ENCODE measurements at regions of chr12 and their contacts with region 1.

Region 1: DNA sequence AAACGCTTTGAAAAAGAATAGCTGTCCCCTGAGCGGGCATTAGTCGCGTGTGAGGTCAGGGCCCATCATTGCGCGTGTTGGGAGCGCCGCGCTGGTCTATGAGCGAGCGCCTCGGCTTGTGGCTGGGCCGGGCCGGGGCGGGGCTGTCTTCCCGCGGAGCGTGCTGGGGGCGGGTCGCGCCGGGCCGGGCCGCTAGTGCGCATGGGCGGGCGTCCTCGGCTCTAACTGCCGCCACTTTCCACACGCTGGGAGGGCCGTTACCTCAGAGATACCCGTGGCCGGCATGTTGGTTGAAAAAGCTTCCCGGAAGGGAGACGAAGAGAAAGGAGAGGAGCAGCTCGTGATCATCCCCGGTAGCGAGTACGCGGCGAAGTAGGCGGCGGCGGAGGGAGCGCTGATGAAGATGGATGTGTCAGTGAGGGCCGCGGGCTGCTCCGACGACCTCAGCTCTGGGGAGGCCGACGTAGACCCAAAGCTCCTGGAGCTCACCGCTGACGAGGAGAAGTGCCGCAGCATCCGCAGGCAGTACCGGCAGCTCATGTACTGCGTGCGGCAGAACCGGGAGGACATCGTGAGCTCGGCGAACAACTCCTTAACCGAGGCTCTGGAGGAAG is at the start of gene EID3:
- DNase-seq: peak; percentile 90 to 93 (median 91)
- H3K4me3 ChIP-seq: peak within 1 kb of the TSS; percentile 64 to 67
- H3K4me3 Mint-ChIP-seq: peak within 1 kb of the TSS; percentile 90 to 99 (median 97)
- H3K27ac ChIP-seq: peak within 1 kb of the TSS; percentile 95
- H3K27ac Mint-ChIP-seq: peak within 1 kb of the TSS; percentile 97 to 98 (median 98)
- H3K4me1 ChIP-seq: peaks cover 41% of the 10 kb centered on the region
- H3K4me1 Mint-ChIP-seq: peaks cover 40 to 78% (median 55%) of the 10 kb centered on the region in 4 donors
- H3K27me3 ChIP-seq: no peaks in the 10 kb centered on the region
- H3K27me3 Mint-ChIP-seq: no peaks in the 10 kb centered on the region
- total RNA-seq, gene EID3: 9.4 to 9.9 TPM

Region 2: GRCh38 chr12:104064031-104064822 is 239.4 kb before region 1 on chr12 and contains the start of gene HCFC2:
- CTCF ChIA-PET with region 1: no interaction called
- POLR2A ChIA-PET with region 1: no interaction called
- intact Hi-C with region 1: loop called (anchors 5 kb)
- DNase-seq: peak; percentile 83 to 91 (median 86)
- H3K4me3 ChIP-seq: peak within 1 kb of the TSS; percentile 91 to 98
- H3K4me3 Mint-ChIP-seq: peak within 1 kb of the TSS; percentile 91 to 97 (median 94)
- H3K27ac ChIP-seq: peak within 1 kb of the TSS; percentile 77
- H3K27ac Mint-ChIP-seq: peak within 1 kb of the TSS; percentile 85 to 95 (median 92)
- H3K4me1 ChIP-seq: peaks cover 21% of the 10 kb centered on the region
- H3K4me1 Mint-ChIP-seq: peaks cover 18 to 35% (median 23%) of the 10 kb centered on the region in 4 donors
- H3K27me3 ChIP-seq: peaks cover 5% of the 10 kb centered on the region
- H3K27me3 Mint-ChIP-seq: peaks cover 4 to 5% of the 10 kb centered on the region in 2 donors
- total RNA-seq, gene HCFC2: 18.1 to 18.5 TPM

Region 3: GRCh38 chr12:104215638-104216297 is 87.9 kb before region 1 on chr12 and contains the start of gene TXNRD1:
- CTCF ChIA-PET with region 1: interaction called, 12 read pairs
- POLR2A ChIA-PET with region 1: interaction called, 6 read pairs
- intact Hi-C with region 1: loop called (anchors 1 kb)
- DNase-seq: peak; percentile 78 to 84 (median 82)
- H3K4me3 ChIP-seq: peak within 1 kb of the TSS in 1 of 2 donors; percentile 62
- H3K4me3 Mint-ChIP-seq: peak within 1 kb of the TSS; percentile 73 to 92 (median 86)
- H3K27ac ChIP-seq: peak within 1 kb of the TSS; percentile 57
- H3K27ac Mint-ChIP-seq: peak within 1 kb of the TSS; percentile 2 to 93 (median 84)
- H3K4me1 ChIP-seq: peaks cover 29% of the 10 kb centered on the region
- H3K4me1 Mint-ChIP-seq: peaks cover 18 to 38% (median 27%) of the 10 kb centered on the region in 4 donors
- H3K27me3 ChIP-seq: no peaks in the 10 kb centered on the region
- H3K27me3 Mint-ChIP-seq: no peaks in the 10 kb centered on the region
- total RNA-seq, gene TXNRD1: 57.6 to 64.5 TPM

Region 4: GRCh38 chr12:104286538-104287482 is 16.8 kb before region 1 on chr12:
- CTCF ChIA-PET with region 1: interaction called, 41 read pairs
- POLR2A ChIA-PET with region 1: interaction called, 97 read pairs
- intact Hi-C with region 1: loop called (anchors 1 kb)
- DNase-seq: peak; percentile 87 to 94 (median 88)
- H3K4me3 ChIP-seq: peak overlapping the region; percentile 80 to 96
- H3K4me3 Mint-ChIP-seq: peak overlapping the region; percentile 94 to 100 (median 99)
- H3K27ac ChIP-seq: peak overlapping the region; percentile 82
- H3K27ac Mint-ChIP-seq: peak overlapping the region; percentile 94 to 99 (median 96)
- H3K4me1 ChIP-seq: peaks cover 35% of the 10 kb centered on the region
- H3K4me1 Mint-ChIP-seq: peaks cover 23 to 41% (median 30%) of the 10 kb centered on the region in 4 donors
- H3K27me3 ChIP-seq: no peaks in the 10 kb centered on the region
- H3K27me3 Mint-ChIP-seq: peaks cover 0 to 2% of the 10 kb centered on the region in 2 donors

Region 5: DNA sequence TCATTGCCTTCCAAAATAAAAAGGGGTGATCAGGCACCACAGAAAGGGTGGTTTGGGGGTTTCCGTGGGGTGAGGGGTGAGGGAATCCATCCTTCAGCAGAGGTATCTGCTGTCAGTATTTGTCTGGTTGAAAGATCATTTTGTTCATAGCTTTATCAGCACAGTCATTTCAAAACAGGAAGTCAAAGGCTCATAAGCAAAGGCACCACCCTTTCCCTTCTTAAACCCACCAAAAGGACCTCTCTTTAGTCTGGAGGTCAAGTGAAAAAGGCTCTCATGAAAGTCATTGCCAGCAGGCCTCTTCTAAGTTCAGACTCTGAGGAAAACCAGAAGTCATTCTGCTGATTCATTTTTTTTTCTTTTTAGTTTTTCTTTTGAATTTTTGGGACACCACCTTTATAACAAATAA is 159.3 kb after region 1 on chr12:
- CTCF ChIA-PET with region 1: no interaction called
- POLR2A ChIA-PET with region 1: no interaction called
- intact Hi-C with region 1: loop called (anchors 10 kb)
- DNase-seq: peak; percentile 53 to 83 (median 58)
- H3K4me3 ChIP-seq: peak overlapping the region; percentile 2 to 21
- H3K4me3 Mint-ChIP-seq: peak overlapping the region; percentile 79 to 93 (median 84)
- H3K27ac ChIP-seq: peak overlapping the region; percentile 62
- H3K27ac Mint-ChIP-seq: peak overlapping the region; percentile 85 to 96 (median 93)
- H3K4me1 ChIP-seq: peaks cover 86% of the 10 kb centered on the region
- H3K4me1 Mint-ChIP-seq: peaks cover 60 to 95% (median 75%) of the 10 kb centered on the region in 4 donors
- H3K27me3 ChIP-seq: no peaks in the 10 kb centered on the region
- H3K27me3 Mint-ChIP-seq: no peaks in the 10 kb centered on the region

Region 6: DNA sequence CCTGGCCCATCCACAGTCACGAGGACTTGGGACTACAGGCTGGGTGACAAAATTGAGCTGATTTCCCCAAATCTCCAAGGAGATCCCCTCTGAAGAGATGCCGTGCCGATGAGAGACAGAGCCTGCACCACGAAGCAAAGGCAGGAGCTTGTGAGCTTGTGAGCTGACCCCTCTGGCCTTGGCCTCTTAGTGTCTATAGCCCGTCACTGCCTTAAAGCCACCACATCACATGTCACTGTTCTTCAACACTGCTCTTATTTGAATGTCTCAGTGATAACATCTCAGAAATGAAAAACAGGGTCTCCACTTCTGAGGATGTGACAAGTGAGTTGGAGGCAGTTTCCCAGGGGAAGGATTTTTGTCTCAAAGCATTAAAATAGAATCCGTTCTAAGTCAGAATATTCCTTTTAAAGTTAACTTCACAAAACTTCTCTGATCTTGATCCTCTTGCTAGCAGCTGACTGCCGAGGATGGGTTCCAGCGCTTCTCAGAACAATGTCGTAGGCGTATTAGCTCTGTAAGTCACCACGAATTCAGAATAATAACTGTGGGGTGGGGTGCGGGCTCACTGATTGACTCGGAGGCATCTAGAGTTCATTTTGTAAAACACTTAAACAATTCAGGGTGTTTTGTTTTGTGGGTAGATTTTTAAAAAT is 190.6 kb after region 1 on chr12:
- CTCF ChIA-PET with region 1: no interaction called
- POLR2A ChIA-PET with region 1: no interaction called
- intact Hi-C with region 1: loop called (anchors 10 kb)
- DNase-seq: peak; percentile 29 to 76 (median 42)
- H3K4me3 ChIP-seq: peak overlapping the region in 1 of 2 donors; percentile 32
- H3K4me3 Mint-ChIP-seq: peak overlapping the region; percentile 66 to 94 (median 84)
- H3K27ac ChIP-seq: peak overlapping the region; percentile 50
- H3K27ac Mint-ChIP-seq: peak overlapping the region; percentile 88 to 99 (median 94)
- H3K4me1 ChIP-seq: peaks cover 93% of the 10 kb centered on the region
- H3K4me1 Mint-ChIP-seq: peaks cover 77 to 96% (median 86%) of the 10 kb centered on the region in 4 donors
- H3K27me3 ChIP-seq: no peaks in the 10 kb centered on the region
- H3K27me3 Mint-ChIP-seq: no peaks in the 10 kb centered on the region